ENCODE measurements at regions of chr10 and their contacts with region 1.

Region 1: DNA sequence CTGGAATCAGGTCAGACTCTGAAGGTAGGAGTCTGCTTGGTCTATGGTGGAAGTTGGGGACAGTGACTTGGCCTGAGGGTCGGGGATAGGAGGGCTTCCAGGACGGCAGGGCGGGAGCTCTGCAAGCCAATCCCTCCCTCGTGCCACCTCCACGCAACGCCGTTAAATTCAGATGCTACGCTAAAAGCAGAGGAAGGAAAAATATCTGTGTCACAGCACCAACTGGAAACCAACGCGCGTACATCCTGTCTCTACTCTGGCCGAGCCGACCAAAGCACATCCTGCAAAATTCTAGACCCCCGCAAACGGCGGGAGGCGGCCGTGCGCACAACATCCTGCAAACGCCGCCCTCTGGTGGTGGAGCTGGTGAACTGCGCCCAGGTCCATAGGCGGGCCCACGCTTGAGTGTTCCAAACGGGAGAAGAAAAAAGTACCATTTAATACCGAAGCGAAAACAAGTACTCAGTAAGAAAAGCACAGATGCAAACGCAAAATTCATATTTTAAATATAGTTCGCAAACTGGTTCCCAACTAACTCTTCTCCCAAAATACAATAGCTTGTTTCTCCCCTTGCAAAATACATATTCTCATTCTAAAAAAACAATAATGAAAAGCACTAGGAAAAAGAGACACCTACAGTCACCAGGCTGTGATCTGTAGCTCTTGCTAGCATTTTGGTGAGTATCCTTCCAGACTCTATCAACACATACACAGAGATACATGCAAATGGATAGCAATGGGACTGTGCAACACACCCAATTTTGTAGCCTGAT is 45.7 kb upstream of the HSPA12A start:
- DNase-seq: peak in 1 of 2 donors; percentile 73
- ATAC-seq: peak; percentile 74

Region 2: GRCh38 chr10:116665541-116666125 is 122.4 kb before region 1 on chr10:
- intact Hi-C with region 1: no loop called
- DNase-seq: no peak
- ATAC-seq: no peak

Region 3: GRCh38 chr10:116683821-116684220 is 104.3 kb before region 1 on chr10:
- intact Hi-C with region 1: loop called in 1 of 2 experiments (anchors 5 kb)
- DNase-seq: no peak
- ATAC-seq: no peak

Region 4: DNA sequence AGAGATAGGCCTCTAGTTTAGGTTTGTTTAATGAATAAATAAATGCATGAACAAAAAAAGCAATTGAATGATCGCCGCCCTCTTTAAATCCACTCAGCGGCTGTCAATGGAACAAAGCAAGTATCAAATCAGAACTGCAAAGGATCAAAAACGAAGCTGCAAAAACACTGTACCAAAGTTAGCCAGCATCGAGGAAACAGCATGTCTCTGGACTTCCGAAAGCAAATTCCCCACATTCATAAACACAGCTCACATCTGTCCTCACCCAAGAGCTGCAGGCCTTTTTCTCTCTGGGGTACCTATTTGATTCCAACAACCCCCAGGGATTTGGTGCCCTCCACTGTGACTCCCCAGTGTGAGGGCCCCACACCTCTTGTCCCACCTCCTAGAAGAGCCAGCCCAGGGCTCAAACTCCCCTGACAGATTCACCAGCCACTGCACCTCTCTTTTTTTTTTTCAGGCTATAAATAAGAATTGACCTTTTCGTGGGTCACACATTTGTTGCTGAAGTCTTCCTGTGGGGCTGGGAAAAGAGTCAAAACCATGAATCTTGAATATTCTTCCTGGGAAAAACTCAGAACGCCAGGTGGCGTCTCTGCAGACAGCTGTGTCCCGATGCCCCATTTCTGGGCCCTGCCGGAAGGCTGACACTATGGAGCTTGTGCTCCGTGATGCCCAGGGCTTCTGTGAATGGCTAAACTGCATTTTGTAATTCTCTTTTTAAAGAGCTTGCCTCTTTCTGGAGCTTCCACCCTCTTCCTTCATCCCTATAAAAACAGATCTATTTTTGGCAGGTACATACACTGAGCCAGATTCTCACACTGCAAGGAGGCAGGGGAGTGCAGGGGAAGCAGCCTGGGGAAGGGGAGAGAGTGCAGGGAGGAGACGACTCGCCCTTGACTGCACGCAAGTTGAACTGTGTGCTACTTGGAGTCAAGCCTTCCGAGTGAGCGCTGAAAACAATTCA is 97.4 kb before region 1 on chr10:
- intact Hi-C with region 1: loop called in 1 of 2 experiments (anchors 10 kb)
- DNase-seq: peak in 1 of 2 donors; percentile 35
- ATAC-seq: peak; percentile 38

Region 5: GRCh38 chr10:116925056-116925455 is 137.0 kb after region 1 on chr10:
- intact Hi-C with region 1: no loop called
- DNase-seq: no peak
- ATAC-seq: no peak